Stomach (tissue), 19 donors: ENCODE measurements at regions of chr5 and their contacts with region 1.

Region 1: DNA sequence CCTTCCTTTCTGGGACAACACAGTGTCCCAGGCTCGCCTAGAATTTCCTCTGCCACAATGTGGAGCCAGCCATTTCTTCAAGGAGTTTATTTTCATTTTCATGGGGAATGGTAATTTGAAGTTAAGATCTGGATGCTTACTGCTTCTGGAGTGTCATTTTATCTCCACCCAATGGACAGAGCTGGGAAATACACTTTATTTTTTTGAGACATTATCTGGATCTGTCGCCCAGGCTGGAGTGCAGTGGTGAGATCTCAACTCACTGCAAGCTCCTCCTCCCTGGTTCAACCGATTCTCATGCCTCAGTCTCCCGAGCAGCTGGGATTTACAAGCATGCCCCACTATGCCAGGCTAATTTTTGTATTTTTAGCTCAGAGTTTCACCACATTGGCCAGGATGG is 12.7 kb upstream of the THG1L start:
- DNase-seq: peak in 1 of 2 donors; percentile 79
- H3K4me3 ChIP-seq: no peak overlapping the region
- H3K27ac ChIP-seq: no peak overlapping the region
- H3K4me1 ChIP-seq: peaks cover 0 to 12% (median 5%) of the 10 kb centered on the region in 4 donors
- H3K27me3 ChIP-seq: no peaks in the 10 kb centered on the region
- CTCF ChIP-seq: peak in 5 of 7 experiments; percentile 25 to 54 (median 30)
- EP300 ChIP-seq: no peak
- POLR2A ChIP-seq: no peak

Region 2: GRCh38 chr5:157335534-157336422 is 382.7 kb before region 1 on chr5:
- intact Hi-C with region 1: loop called (anchors 10 kb)
- DNase-seq: no peak
- H3K4me3 ChIP-seq: no peak overlapping the region
- H3K27ac ChIP-seq: peak overlapping the region in 4 of 5 donors; percentile 10 to 62 (median 48)
- H3K4me1 ChIP-seq: peaks cover 0 to 25% (median 15%) of the 10 kb centered on the region in 4 donors
- H3K27me3 ChIP-seq: no peaks in the 10 kb centered on the region
- CTCF ChIP-seq: no peak
- EP300 ChIP-seq: no peak
- POLR2A ChIP-seq: no peak